ENCODE measurements at regions of chr2 and their contacts with region 1.

Region 1: DNA sequence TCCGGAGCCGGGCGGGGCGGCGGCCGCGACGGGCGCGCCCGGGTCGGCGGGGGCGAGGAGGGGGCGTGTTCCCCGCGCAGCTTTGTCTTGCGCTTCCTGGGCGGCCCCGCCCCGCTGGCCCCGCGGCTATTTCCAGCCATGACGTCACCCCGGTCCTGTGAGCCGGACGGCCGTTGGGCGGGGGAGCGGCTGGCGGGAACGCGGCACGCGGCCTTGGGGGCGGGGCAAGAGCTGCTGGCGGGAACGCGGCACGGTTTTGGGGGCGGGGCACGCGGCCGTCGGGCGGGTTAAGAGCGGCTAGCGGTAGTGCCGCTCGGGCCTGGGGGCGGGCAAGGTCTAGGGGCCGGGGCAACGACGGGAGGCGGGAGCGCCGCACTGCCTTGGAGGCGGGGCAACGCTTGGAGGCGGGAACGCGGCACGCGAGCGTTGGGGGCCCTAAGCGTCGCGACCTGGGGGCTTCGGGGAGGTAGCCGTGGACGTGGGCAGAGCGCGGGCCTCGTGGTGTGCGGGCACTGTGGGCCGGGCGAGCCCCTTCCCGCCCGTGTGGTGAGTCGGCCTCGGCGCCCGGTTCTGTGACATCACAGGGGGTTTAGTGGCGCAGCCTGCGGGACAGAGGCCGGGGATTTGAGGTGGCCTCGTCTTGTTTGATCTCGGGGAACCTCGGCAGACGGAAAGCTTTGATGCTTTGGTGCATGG is 704 bp downstream of the KLF11 start:
- DNase-seq: peak; percentile 81 to 90 (median 88)
- H3K4me3 ChIP-seq: peak overlapping the region in 4 of 7 experiments; percentile 8 to 67 (median 54)
- H3K27ac ChIP-seq: no peak overlapping the region
- H3K4me1 ChIP-seq: peaks cover 0 to 20% (median 9%) of the 10 kb centered on the region in 4 experiments
- H3K27me3 ChIP-seq: peaks cover 0 to 2% (median 0%) of the 10 kb centered on the region in 5 experiments

Region 2: DNA sequence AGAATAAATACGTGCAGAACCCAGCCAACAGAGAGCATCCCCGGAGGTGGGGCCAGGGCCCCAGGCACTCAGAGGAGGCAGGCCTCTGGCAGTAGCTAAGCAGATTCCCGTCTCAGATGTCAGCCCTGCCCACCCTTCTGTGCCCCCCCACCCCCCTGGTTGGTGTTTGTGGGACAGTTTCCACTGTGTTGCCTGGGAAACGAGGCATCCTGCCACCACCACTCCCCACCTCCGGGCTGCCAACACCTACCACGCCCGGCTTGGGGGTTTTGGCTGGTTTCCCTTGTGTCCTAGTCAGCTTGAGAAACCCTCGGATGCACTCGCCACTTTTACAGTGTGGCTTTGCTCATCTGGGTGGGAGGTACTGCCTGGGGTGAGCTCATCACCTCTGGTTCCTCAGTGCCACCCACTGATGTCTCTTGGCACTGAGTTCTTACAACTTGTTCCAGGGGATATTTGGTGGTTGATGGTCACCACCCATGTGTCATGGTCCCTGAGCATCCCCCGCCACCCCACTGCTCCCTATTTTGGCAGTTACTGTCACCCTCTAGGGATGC is 340.9 kb before region 1 on chr2:
- CTCF ChIA-PET with region 1: no interaction called
- POLR2A ChIA-PET with region 1: no interaction called
- DNase-seq: peak; percentile 66 to 94 (median 88)
- H3K4me3 ChIP-seq: no peak overlapping the region
- H3K27ac ChIP-seq: no peak overlapping the region
- H3K4me1 ChIP-seq: peaks cover 0 to 21% (median 13%) of the 10 kb centered on the region in 4 experiments
- H3K27me3 ChIP-seq: no peaks in the 10 kb centered on the region

Region 3: GRCh38 chr2:9799665-9800632 is 244.1 kb before region 1 on chr2:
- CTCF ChIA-PET with region 1: interaction called, 12 read pairs
- POLR2A ChIA-PET with region 1: interaction called, 3 read pairs
- DNase-seq: peak; percentile 67 to 82 (median 76)
- H3K4me3 ChIP-seq: peak overlapping the region in 6 of 7 experiments; percentile 8 to 62 (median 29)
- H3K27ac ChIP-seq: no peak overlapping the region
- H3K4me1 ChIP-seq: peaks cover 3 to 22% (median 13%) of the 10 kb centered on the region in 4 experiments
- H3K27me3 ChIP-seq: no peaks in the 10 kb centered on the region

Region 4: DNA sequence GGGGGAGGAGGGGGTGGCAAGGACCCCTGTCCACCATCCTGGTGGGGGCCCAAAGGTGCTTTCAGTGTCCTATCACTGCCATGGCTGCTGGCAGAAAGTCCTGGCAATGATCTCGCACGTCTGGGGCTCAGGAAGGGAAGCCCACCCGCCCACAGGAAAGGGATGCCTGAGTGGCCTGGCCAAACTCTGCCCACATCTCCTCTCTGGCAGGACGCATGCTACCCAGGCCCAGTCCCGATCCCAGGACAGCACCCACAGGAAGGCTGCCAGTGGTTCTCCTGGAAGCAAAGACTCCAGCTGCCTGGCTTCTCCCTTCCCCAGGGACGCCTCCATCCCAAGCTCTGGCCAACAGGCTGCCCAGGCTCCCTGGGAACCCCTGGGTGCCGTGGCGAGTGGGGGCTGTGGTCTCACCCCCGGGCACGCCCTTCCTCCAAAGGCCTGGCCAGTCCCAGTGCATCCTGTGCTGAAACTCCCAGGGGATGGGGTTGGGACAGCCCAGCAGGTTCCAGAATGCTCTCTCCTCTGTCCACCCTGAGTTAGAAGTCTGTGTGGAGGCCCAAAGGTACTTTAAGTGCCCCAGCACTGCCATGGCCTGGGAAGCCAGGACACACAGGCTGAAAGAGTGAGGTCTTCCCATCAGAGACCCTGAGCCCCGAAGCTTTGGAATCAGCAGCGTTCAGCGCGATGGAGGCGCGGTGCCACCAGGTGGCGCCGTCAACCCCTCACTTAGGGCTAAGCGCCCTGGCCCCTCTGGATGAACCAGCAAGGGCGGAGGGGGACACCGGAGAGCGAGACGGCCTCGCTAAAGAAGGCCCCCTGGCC is 230.5 kb before region 1 on chr2:
- CTCF ChIA-PET with region 1: interaction called, 71 read pairs
- POLR2A ChIA-PET with region 1: no interaction called
- DNase-seq: peak; percentile 62 to 80 (median 73)
- H3K4me3 ChIP-seq: peak overlapping the region in 1 of 7 experiments; percentile 49
- H3K27ac ChIP-seq: no peak overlapping the region
- H3K4me1 ChIP-seq: peaks cover 0 to 16% (median 14%) of the 10 kb centered on the region in 4 experiments
- H3K27me3 ChIP-seq: peaks cover 0 to 5% (median 0%) of the 10 kb centered on the region in 5 experiments

Region 5: GRCh38 chr2:10057231-10058107 is 13.4 kb after region 1 on chr2:
- CTCF ChIA-PET with region 1: interaction called, 181 read pairs
- POLR2A ChIA-PET with region 1: no interaction called
- DNase-seq: peak in 2 of 3 donors; percentile 34 to 39
- H3K4me3 ChIP-seq: peak overlapping the region in 4 of 7 experiments; percentile 23 to 69 (median 56)
- H3K27ac ChIP-seq: no peak overlapping the region
- H3K4me1 ChIP-seq: peaks cover 0 to 9% (median 5%) of the 10 kb centered on the region in 4 experiments
- H3K27me3 ChIP-seq: peaks cover 0 to 4% (median 0%) of the 10 kb centered on the region in 5 experiments

Region 6: DNA sequence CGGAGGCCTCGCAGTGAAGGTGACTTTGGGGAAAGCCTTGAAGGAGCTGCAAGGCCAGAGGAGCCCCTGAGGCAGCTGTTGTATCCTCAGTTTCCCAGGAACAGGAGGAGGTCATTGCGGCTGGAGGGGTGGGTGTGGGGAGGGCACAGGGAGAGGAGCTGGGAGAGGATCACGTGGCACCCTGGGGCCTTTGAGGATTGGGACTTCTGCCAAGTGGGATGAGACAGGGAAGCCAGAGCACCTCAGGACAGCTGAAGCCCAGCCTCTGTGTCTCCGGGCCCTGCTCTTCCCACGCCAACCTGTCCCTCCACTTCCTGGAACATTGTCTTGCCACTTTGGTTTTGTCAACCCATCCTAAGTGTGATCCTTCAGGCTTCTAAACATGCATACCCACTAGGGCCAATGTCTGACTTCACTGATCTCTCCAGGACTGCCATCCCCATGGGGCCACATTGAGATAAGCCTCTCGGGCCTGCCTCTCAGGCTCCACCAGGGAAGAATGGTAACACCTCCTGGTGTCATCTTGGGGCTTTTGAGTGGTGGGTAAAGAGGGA is 59.2 kb after region 1 on chr2:
- CTCF ChIA-PET with region 1: no interaction called
- POLR2A ChIA-PET with region 1: no interaction called
- DNase-seq: no peak
- H3K4me3 ChIP-seq: no peak overlapping the region
- H3K27ac ChIP-seq: no peak overlapping the region
- H3K4me1 ChIP-seq: no peaks in the 10 kb centered on the region
- H3K27me3 ChIP-seq: peaks cover 0 to 2% (median 0%) of the 10 kb centered on the region in 5 experiments